Activated CD4-positive, alpha-beta T cell treated with anti-CD3 and anti-CD28 coated beads, Interleukin-2, amount 10 ng/mL, durations not matched to agents 24 days and 14 days (primary cell): ENCODE measurements at regions of chr16 and their contacts with region 1.

Region 1: DNA sequence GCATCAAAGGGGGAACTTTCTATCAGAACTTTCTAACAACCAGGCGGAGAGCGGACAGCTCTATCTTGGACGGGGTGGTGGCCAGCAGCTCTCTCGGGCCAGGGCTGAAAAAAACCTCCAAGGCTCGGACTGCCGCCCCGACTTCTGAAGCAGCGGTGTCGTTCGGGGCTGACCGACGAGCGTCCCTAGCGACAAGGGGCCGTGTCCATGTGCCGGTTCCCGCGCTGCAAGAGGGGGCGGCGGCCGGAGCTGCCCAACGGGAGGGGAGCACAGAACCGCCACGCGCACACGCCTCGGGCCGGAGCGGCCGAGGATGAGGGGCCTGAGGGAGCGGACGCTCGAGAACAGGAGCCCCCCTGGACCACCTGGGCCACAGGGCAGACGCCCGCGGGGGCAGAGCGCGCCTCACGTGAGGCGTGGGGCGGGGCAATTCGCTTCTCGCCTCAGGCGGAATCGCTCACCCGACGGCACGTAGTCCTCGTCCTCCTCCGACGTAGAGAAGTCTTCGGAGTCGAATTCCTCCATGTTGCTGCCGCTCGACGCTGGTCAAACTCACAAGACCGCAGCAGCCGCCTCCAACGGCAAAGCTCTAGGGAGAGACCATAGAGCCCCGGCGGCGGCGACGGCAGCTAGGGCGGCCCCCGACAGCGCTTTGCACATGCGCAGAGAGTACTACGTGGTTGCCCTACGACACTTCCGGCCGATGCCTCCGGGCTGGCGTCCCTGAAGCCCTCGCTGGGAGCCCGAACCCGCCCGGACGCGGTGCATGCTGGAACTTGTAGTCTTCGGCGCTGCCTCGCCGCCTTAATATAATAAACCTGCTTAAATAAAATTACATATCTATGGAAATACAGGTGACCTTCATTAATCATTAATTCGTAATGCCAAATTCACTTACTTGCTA is at the start of gene CFDP1:
- DNase-seq: peak; percentile 99
- H3K4me3 Mint-ChIP-seq: peak within 1 kb of the TSS; percentile 83
- H3K27ac Mint-ChIP-seq: peak within 1 kb of the TSS; percentile 94
- H3K4me1 Mint-ChIP-seq: peaks cover 23% of the 10 kb centered on the region
- H3K27me3 Mint-ChIP-seq: no peaks in the 10 kb centered on the region
- total RNA-seq, gene CFDP1: 33.7 and 38.9 TPM in 2 replicates

Region 2: GRCh38 chr16:74984535-74985296 is 448.4 kb before region 1 on chr16 and contains the start of gene WDR59:
- intact Hi-C with region 1: loop called (anchors 10 kb)
- DNase-seq: peak; percentile 100
- H3K4me3 Mint-ChIP-seq: peak within 1 kb of the TSS; percentile 94
- H3K27ac Mint-ChIP-seq: peak within 1 kb of the TSS; percentile 95
- H3K4me1 Mint-ChIP-seq: peaks cover 16% of the 10 kb centered on the region
- H3K27me3 Mint-ChIP-seq: no peaks in the 10 kb centered on the region
- total RNA-seq, gene WDR59: 80.6 and 91.5 TPM in 2 replicates

Region 3: GRCh38 chr16:75267631-75268264 is 165.3 kb before region 1 on chr16:
- intact Hi-C with region 1: no loop called
- DNase-seq: no peak
- H3K4me3 Mint-ChIP-seq: no peak overlapping the region
- H3K27ac Mint-ChIP-seq: peak overlapping the region; percentile 48
- H3K4me1 Mint-ChIP-seq: no peaks in the 10 kb centered on the region
- H3K27me3 Mint-ChIP-seq: peaks cover 48% of the 10 kb centered on the region

Region 4: GRCh38 chr16:75402821-75403475 is 30.1 kb before region 1 on chr16:
- intact Hi-C with region 1: loop called (anchors 2 kb)
- DNase-seq: no peak
- H3K4me3 Mint-ChIP-seq: no peak overlapping the region
- H3K27ac Mint-ChIP-seq: no peak overlapping the region
- H3K4me1 Mint-ChIP-seq: peaks cover 12% of the 10 kb centered on the region
- H3K27me3 Mint-ChIP-seq: no peaks in the 10 kb centered on the region

Region 5: DNA sequence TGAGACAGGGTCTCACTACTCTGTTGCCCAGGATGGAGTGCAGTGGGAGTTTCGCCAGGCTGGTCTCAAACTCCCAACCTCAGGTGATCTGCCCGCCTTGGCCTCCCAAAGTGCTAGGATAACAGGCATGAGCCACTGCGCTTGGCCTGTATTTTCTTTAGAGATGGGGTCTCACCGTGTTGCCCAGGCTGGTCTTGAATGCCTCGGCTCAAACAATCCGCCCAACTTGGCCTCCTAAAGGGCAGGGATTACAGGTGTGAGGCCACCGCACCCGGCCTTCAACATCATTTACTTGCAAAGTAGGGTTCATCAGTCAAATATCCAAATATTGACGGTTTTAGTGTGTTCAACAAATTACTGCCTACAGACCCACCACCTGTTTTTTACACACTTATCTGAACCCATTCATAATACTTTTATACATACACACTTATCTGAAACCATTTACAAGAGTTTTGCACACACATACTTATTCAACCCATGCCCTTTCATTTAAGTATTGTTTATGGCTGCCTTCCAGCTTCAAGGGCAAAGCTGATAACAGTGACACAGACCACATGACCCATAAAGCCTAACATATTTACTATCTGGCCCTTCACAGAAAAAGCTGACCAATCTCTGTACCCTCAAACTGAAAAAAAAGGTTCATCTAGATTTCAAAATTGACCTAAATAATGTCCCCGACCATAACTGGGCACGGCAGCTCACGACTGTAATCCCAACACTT is 19.5 kb after region 1 on chr16:
- intact Hi-C with region 1: no loop called
- DNase-seq: no peak
- H3K4me3 Mint-ChIP-seq: no peak overlapping the region
- H3K27ac Mint-ChIP-seq: no peak overlapping the region
- H3K4me1 Mint-ChIP-seq: peaks cover 5% of the 10 kb centered on the region
- H3K27me3 Mint-ChIP-seq: no peaks in the 10 kb centered on the region

Region 6: GRCh38 chr16:75566040-75566810 is 133.1 kb after region 1 on chr16 and contains the start of gene GABARAPL2:
- intact Hi-C with region 1: loop called (anchors 1 kb)
- DNase-seq: peak; percentile 98
- H3K4me3 Mint-ChIP-seq: peak within 1 kb of the TSS; percentile 90
- H3K27ac Mint-ChIP-seq: peak within 1 kb of the TSS; percentile 87
- H3K4me1 Mint-ChIP-seq: peaks cover 28% of the 10 kb centered on the region
- H3K27me3 Mint-ChIP-seq: peaks cover 14% of the 10 kb centered on the region
- total RNA-seq, gene GABARAPL2: 69.9 and 70.4 TPM in 2 replicates

Region 7: DNA sequence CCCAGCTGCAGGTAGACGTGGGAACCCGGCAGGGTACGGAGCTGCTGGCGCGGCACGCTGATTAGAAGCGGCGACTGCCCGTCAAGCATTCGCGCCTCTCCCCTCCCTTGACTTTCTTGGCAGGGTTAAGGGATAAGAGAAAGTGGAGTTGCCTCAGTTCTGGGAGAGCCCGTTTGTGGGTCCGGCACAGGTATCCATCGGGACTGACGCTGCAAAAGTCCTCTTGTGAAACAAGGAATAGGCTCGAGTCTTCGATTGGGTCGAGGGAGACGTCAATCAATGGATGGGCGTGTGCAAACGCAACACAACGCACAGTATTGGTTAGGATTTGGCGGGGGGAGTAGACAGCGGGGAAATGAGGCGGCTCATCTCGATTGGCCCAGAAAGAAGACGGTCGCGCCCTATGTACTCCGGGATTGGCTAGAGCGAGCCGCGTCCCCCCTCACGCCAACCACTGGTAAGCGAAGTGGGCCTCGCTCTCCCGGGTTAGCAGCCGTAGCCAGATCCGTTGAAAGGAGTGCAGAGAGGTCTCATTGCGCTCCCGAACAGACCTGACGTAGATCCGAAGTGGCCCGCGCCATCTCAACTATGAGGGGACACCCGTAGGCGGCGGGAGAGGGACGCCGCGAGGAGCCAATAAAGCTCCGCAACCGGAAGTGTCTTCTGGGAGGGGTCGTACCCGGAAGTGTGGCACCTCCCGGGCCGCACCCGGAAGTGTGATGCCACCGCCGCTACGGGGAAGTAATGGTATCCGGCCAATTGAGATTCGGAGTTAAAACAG is 1757.6 kb after region 1 on chr16 and contains the start of gene MON1B:
- intact Hi-C with region 1: loop called (anchors 1 kb)
- DNase-seq: peak; percentile 98
- H3K4me3 Mint-ChIP-seq: peak within 1 kb of the TSS; percentile 97
- H3K27ac Mint-ChIP-seq: peak within 1 kb of the TSS; percentile 99
- H3K4me1 Mint-ChIP-seq: peaks cover 36% of the 10 kb centered on the region
- H3K27me3 Mint-ChIP-seq: peaks cover 10% of the 10 kb centered on the region
- total RNA-seq, gene MON1B: 65.7 and 69.3 TPM in 2 replicates